K562 (cell line): ENCODE measurements at regions of chr5 and their contacts with region 1.

Region 1: GRCh38 chr5:75265731-75266130 is 29.1 kb upstream of the ANKRD31 start:
- DNase-seq: peak in 2 of 4 experiments; percentile 24 to 25
- ATAC-seq: peak; percentile 62; the same call in 2 of the 3 replicates
- H3K4me3 ChIP-seq: no peak overlapping the region
- H3K27ac ChIP-seq: no peak overlapping the region
- H3K4me1 ChIP-seq: peaks cover 0 to 3% of the 10 kb centered on the region in 2 experiments; a peak in 1 of 5 replicates
- H3K27me3 ChIP-seq: peaks cover 4 to 9% of the 10 kb centered on the region in 2 experiments; a peak in 2 of 5 replicates
- CTCF ChIP-seq: peak in 2 of 3 experiments; percentile 31 to 66; a peak in 3 of 6 replicates
- EP300 ChIP-seq: no peak
- POLR2A ChIP-seq: no peak
- RAD21 ChIP-seq: peak; percentile 53 to 70

Region 2: DNA sequence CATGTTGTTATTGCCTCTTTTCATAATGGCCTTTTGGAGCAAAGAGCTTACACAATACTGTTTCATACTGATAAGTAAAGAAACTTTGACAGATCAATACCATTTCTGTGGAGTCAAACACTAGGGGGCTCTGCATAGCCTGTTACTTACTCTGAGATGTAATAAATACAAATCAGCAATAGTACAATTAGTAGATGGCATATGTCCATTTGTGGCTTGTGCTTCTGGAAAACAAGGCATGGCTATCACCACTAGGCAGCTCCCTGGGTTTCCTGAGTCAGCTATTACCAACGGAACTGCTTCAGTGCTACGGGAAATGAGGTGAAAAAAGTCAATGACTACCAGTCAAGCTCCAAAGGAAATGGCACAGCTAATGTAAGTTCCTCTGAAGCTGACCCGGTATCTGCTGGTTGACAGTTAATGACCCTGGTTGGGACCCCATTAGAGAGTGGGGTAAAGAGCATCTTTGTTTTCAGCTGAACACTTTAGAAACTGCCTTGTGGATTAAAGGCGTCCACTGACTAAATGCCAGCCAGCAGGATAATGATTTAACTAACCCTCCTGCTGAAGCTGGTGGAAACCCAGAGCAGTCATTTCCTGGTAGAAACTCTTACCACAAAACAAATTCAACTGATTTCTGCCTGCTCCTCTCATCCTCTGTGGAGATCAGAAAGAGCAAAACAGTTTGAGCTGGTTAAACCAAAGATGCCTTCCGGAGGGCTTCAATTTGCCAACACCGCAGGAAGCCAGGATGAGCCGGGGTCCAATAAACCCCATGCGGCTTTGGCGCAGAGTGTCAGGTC is 330.6 kb before region 1 on chr5:
- CTCF ChIA-PET with region 1: no interaction called
- POLR2A ChIA-PET with region 1: no interaction called
- in situ Hi-C with region 1: no loop called
- intact Hi-C with region 1: loop called (anchors 5 kb)
- DNase-seq: peak in 1 of 4 experiments; percentile 3
- ATAC-seq: no peak
- H3K4me3 ChIP-seq: no peak overlapping the region
- H3K27ac ChIP-seq: no peak overlapping the region
- H3K4me1 ChIP-seq: no peaks in the 10 kb centered on the region
- H3K27me3 ChIP-seq: peaks cover 0 to 4% of the 10 kb centered on the region in 2 experiments; a peak in 2 of 5 replicates
- CTCF ChIP-seq: 0 out of 6 replicates have a peak, but pooled peaks of 2 of the 3 experiments have one; percentile 13 to 19
- EP300 ChIP-seq: no peak
- POLR2A ChIP-seq: no peak
- RAD21 ChIP-seq: peak in 1 of 2 experiments; percentile 13; a peak in 1 of 4 replicates

Region 3: GRCh38 chr5:75049456-75050351 is 216.0 kb before region 1 on chr5:
- CTCF ChIA-PET with region 1: interaction called, 5 read pairs
- POLR2A ChIA-PET with region 1: no interaction called
- in situ Hi-C with region 1: no loop called
- intact Hi-C with region 1: loop called (anchors 5 kb)
- DNase-seq: peak; percentile 66 to 74 (median 68)
- ATAC-seq: peak; percentile 91
- H3K4me3 ChIP-seq: no peak overlapping the region
- H3K27ac ChIP-seq: no peak overlapping the region
- H3K4me1 ChIP-seq: peaks cover 0 to 16% of the 10 kb centered on the region in 2 experiments; a peak in 3 of 5 replicates
- H3K27me3 ChIP-seq: peaks cover 16 to 29% of the 10 kb centered on the region in 2 experiments
- CTCF ChIP-seq: peak; percentile 72 to 85 (median 82)
- EP300 ChIP-seq: no peak
- POLR2A ChIP-seq: no peak
- RAD21 ChIP-seq: peak; percentile 48 to 75

Region 4: GRCh38 chr5:75482482-75482881 is 216.8 kb after region 1 on chr5:
- CTCF ChIA-PET with region 1: no interaction called
- POLR2A ChIA-PET with region 1: no interaction called
- in situ Hi-C with region 1: no loop called
- intact Hi-C with region 1: no loop called
- DNase-seq: no peak
- ATAC-seq: no peak
- H3K4me3 ChIP-seq: no peak overlapping the region
- H3K27ac ChIP-seq: no peak overlapping the region
- H3K4me1 ChIP-seq: no peaks in the 10 kb centered on the region
- H3K27me3 ChIP-seq: no peaks in the 10 kb centered on the region
- CTCF ChIP-seq: no peak
- EP300 ChIP-seq: no peak
- POLR2A ChIP-seq: no peak
- RAD21 ChIP-seq: no peak

Region 5: DNA sequence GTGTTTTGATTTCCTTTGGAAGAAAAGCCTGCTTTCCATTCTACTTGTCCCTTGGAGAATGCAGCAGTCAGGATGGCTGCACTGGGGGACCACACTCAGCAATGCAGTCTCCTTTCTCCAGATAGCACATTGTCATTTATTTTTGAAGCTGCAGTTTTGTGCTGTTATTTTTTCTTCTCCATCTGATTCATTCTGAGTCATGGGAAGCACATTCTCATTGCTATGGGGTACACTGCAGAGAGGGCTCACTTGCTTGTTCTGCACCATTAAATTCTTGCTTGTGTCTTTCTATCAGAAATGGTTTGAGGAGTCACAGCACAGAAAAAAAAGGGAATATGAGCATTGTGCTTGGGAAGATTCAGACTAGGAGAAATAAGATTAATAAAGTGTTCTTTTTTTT is 491.2 kb after region 1 on chr5:
- CTCF ChIA-PET with region 1: no interaction called
- POLR2A ChIA-PET with region 1: no interaction called
- in situ Hi-C with region 1: no loop called
- intact Hi-C with region 1: no loop called
- DNase-seq: no peak
- ATAC-seq: no peak
- H3K4me3 ChIP-seq: no peak overlapping the region
- H3K27ac ChIP-seq: no peak overlapping the region
- H3K4me1 ChIP-seq: no peaks in the 10 kb centered on the region
- H3K27me3 ChIP-seq: peaks cover 0 to 6% of the 10 kb centered on the region in 2 experiments; a peak in 1 of 5 replicates
- CTCF ChIP-seq: no peak
- EP300 ChIP-seq: no peak
- POLR2A ChIP-seq: no peak
- RAD21 ChIP-seq: no peak